Activated B cell treated with CpG ODN at 0.5 μM for 24 hours (primary cell): ENCODE measurements at regions of chr16 and their contacts with region 1.

Region 1: GRCh38 chr16:78122774-78123315 is 23.4 kb downstream of the WWOX start:
- DNase-seq: no peak
- ATAC-seq: peak; percentile 58
- H3K4me3 Mint-ChIP-seq: no peak overlapping the region
- H3K27ac Mint-ChIP-seq: no peak overlapping the region
- H3K4me1 Mint-ChIP-seq: peaks cover 3% of the 10 kb centered on the region
- H3K27me3 Mint-ChIP-seq: no peaks in the 10 kb centered on the region
- CTCF ChIP-seq: no peak

Region 2: DNA sequence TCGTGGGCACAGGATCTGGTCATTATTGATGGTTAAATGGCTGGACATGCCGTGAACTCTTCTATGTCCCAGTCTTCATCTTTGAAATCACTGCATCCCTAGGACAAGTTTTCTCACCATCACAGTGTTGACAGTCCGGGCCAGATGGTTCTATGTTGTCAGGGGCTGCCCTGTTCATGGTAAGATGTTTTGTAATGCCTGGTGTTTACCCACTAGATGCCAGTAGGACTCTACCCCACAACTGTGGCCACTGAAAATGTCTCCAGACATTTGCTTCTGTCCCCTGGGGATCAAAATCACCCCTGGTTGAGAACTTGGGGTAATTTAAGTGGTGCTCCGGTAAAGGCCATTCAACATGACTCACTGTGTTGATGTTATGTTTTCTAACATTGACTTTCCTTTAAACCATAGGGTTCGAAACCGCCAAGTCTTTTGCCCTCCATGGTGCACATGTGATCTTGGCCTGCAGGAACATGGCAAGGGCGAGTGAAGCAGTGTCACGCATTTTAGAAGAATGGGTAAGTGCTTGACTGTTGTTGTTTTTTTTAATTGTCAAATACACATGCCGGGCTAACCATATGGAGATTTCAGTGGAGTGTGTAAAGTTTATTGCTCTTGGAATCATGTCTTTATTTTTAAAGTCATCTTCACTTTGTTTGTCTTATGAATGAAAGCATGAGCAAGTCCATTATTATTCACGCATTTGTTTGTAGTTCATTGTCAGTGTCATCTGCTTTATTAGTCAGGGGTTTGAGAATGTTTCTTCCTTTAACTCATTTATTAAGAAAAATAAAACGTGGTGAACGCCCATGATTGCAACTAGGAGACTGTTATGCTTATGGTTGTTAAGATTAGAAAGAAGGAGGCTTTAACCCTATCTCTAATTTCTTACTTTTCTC is 41.2 kb after region 1 on chr16:
- CTCF ChIA-PET with region 1: no interaction called
- POLR2A ChIA-PET with region 1: no interaction called
- intact Hi-C with region 1: no loop called
- DNase-seq: no peak
- ATAC-seq: no peak
- H3K4me3 Mint-ChIP-seq: no peak overlapping the region
- H3K27ac Mint-ChIP-seq: no peak overlapping the region
- H3K4me1 Mint-ChIP-seq: no peaks in the 10 kb centered on the region
- H3K27me3 Mint-ChIP-seq: no peaks in the 10 kb centered on the region
- CTCF ChIP-seq: no peak

Region 3: GRCh38 chr16:78235168-78235800 is 112.4 kb after region 1 on chr16:
- CTCF ChIA-PET with region 1: interaction called, 31 read pairs
- POLR2A ChIA-PET with region 1: no interaction called
- intact Hi-C with region 1: loop called (anchors 1 kb)
- DNase-seq: peak; percentile 45
- ATAC-seq: peak; percentile 75
- H3K4me3 Mint-ChIP-seq: no peak overlapping the region
- H3K27ac Mint-ChIP-seq: no peak overlapping the region
- H3K4me1 Mint-ChIP-seq: no peaks in the 10 kb centered on the region
- H3K27me3 Mint-ChIP-seq: no peaks in the 10 kb centered on the region
- CTCF ChIP-seq: peak; percentile 74

Region 4: DNA sequence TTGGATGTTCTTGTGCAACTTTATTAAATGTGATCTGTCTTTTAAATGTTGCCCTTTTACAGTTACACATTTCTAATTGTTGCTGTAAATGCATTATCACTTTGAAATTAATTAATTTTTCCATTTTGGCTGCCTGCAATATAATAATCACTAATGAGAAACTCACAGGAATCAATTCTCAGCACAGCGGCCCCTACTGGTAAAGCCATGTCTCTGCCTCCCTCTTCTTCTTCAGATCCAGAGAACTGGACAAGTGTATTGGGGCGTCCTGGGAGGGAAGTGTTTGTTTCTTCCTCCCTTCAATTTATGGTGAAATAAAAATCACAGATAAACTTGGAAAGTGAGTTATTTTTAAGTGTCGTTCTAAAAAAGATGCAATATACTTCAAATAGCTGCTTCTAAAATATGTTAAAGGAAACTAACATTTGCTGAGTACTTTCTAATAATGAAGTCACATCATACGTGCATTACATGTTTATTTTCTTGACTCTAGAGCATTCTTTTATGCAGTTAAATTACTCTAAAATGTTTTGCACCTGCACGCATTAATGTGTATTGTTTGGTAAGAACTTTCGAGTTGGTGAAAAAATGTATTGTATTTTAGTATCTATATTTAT is 314.6 kb after region 1 on chr16:
- CTCF ChIA-PET with region 1: no interaction called
- POLR2A ChIA-PET with region 1: no interaction called
- intact Hi-C with region 1: loop called (anchors 10 kb)
- DNase-seq: no peak
- ATAC-seq: no peak
- H3K4me3 Mint-ChIP-seq: no peak overlapping the region
- H3K27ac Mint-ChIP-seq: no peak overlapping the region
- H3K4me1 Mint-ChIP-seq: no peaks in the 10 kb centered on the region
- H3K27me3 Mint-ChIP-seq: no peaks in the 10 kb centered on the region
- CTCF ChIP-seq: peak; percentile 88